ENCODE measurements at regions of chr4 and their contacts with region 1.

Region 1: GRCh38 chr4:145805490-145805889 is 125.5 kb downstream of the C4orf51 start:
- DNase-seq: peak; percentile 51 to 72
- H3K4me3 ChIP-seq: no peak overlapping the region
- H3K4me3 Mint-ChIP-seq: no peak overlapping the region
- H3K27ac Mint-ChIP-seq: peak overlapping the region; percentile 31
- H3K4me1 ChIP-seq: peaks cover 42% of the 10 kb centered on the region
- H3K4me1 Mint-ChIP-seq: peaks cover 28% of the 10 kb centered on the region
- H3K27me3 ChIP-seq: no peaks in the 10 kb centered on the region
- H3K27me3 Mint-ChIP-seq: no peaks in the 10 kb centered on the region
- CTCF ChIP-seq: no peak

Region 2: GRCh38 chr4:145732895-145733880 is 72.3 kb before region 1 on chr4:
- CTCF ChIA-PET with region 1: no interaction called
- POLR2A ChIA-PET with region 1: no interaction called
- intact Hi-C with region 1: loop called (anchors 1 kb)
- DNase-seq: peak; percentile 93
- H3K4me3 ChIP-seq: peak overlapping the region; percentile 63
- H3K4me3 Mint-ChIP-seq: peak overlapping the region; percentile 84
- H3K27ac Mint-ChIP-seq: peak overlapping the region; percentile 89
- H3K4me1 ChIP-seq: peaks cover 49% of the 10 kb centered on the region
- H3K4me1 Mint-ChIP-seq: peaks cover 27% of the 10 kb centered on the region
- H3K27me3 ChIP-seq: no peaks in the 10 kb centered on the region
- H3K27me3 Mint-ChIP-seq: no peaks in the 10 kb centered on the region
- CTCF ChIP-seq: no peak